ENCODE measurements at regions of chr2 and their contacts with region 1.

Region 1: DNA sequence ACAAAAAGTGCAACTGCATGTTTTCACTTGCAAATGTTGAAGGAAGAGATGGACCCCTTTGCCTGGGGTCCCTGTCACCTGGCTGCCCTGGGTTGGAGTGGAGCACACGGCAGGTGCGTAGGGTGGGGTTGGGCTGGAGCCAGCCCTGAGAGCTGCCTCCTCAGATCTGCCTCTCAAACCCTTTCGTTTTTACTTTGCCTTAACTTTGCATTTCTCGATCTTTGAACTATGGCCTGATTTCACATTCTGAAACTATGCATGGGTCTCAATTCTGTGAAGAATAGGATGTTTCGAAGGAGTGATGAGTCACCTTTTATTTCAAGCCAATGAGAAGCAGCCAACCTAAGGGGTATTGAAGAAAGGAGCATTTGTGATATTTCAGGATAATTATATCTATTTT is 132.8 kb downstream of the ACOXL start:
- DNase-seq: no peak

Region 2: DNA sequence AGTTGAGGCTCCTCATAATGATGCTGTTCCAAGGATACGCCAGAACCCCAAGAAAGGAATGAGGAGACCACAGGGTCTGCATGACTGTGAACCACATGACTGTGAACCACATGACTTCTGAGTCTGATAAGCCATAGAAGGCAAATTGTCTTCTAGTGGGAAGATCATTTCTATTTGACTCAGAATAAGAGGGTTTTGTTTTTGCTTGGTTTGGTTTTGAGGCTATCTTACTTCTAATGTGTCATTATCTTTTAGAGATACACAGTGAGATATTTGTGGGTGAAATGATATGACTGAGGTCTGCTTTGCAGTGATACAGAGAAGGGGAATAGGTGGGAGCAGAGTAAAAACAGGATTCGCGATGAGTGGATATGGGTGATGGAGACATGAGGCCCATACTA is 226.6 kb after region 1 on chr2:
- in situ Hi-C with region 1: loop called (anchors 10 kb)
- DNase-seq: no peak

Measured in Caki2 (cell line).